ENCODE measurements at regions of chr5 and their contacts with region 1.

Region 1: DNA sequence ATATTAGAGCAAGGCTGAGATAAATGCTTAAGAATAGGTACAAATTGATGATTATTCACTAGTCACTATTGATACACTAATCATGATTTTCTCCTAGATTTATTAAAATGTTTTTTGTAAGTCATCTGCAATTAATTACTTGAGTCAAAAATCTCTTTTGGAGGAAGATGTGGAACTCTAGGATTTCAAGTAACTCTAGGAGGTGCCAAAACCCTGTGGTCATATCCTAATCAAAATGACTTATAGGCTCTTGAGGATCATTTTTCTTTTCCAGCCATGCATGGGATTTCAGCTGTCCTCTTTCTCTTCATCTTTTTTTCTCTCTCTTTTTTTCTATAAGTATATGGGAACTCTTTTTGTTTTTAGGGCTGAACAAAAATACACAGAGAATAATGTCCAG is 141.8 kb upstream of the CD180 start:
- DNase-seq: no peak

Region 2: DNA sequence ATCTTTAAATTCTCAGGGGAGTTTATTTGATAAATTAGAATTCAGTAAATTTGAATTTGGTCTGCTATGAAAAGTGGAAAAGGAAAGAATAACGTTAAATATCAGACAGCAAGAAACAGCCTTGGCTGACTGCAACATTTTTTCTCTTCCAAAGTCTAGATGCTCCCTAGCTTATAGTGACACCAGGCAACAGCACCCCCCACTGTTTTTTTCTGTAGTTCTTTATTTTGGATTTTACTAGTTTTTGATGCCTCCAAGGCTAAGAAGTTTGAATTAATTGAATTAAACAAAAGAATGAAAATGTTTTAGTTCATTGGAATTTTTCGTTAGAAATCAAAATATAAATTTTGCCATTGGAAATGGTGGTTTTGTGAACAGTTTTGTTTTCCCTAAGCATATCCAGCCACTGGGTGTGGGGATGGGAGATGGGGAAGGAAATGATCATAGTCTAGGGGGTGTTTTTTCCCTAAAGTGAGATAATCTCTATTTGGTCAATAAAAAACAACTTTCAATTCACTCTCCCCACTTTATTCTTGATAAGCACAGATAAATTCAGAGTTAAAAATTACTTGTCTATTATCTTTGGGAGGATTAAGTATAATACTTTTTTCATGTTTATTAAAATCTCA is 57.5 kb after region 1 on chr5:
- intact Hi-C with region 1: loop called (anchors 10 kb)
- DNase-seq: peak in 1 of 10 donors; percentile 32